HEK293T (cell line): ENCODE measurements at regions of chr2 and their contacts with region 1.

Region 1: DNA sequence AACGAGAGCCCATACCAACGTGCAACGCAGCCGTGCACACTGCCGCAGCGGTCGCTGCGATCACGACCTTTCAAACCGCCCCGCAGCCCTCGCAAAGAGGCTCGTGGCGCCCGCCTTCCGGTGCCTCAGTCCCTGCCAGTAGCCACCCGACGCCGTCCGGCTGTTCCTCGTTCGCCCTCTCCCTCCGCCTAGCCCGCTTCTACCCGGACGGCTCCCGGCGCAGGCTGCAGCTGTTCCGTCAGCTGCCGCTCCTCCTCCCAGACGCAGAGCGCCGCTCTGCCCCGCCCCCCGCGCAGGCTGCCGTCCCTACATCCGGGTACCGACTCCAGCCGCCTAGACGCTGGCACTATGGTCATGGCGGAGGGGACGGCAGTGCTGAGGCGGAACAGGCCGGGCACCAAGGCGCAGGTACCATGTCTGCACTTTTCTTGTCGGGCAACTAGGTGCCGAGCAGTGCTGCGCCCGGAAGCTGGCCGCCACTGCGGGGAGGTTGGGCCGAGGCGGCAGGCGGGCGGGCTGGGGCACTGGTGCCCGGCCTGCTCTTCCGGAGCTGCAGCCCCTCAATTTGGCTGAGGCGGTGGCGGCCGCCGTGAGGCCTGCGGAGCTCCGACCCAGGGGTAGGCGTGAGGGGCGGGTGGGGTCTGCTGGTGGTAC is at the start of gene MOB4:
- DNase-seq: peak; percentile 93

Region 2: GRCh38 chr2:197477797-197478196 is 38.1 kb before region 1 on chr2:
- CTCF ChIA-PET with region 1: no interaction called
- POLR2A ChIA-PET with region 1: no interaction called
- DNase-seq: no peak

Region 3: GRCh38 chr2:197499594-197500526 is 16.0 kb before region 1 on chr2 and contains the starts of genes HSPD1 and HSPE1:
- CTCF ChIA-PET with region 1: interaction called, 4 read pairs
- POLR2A ChIA-PET with region 1: interaction called, 52 read pairs
- DNase-seq: peak; percentile 93

Region 4: DNA sequence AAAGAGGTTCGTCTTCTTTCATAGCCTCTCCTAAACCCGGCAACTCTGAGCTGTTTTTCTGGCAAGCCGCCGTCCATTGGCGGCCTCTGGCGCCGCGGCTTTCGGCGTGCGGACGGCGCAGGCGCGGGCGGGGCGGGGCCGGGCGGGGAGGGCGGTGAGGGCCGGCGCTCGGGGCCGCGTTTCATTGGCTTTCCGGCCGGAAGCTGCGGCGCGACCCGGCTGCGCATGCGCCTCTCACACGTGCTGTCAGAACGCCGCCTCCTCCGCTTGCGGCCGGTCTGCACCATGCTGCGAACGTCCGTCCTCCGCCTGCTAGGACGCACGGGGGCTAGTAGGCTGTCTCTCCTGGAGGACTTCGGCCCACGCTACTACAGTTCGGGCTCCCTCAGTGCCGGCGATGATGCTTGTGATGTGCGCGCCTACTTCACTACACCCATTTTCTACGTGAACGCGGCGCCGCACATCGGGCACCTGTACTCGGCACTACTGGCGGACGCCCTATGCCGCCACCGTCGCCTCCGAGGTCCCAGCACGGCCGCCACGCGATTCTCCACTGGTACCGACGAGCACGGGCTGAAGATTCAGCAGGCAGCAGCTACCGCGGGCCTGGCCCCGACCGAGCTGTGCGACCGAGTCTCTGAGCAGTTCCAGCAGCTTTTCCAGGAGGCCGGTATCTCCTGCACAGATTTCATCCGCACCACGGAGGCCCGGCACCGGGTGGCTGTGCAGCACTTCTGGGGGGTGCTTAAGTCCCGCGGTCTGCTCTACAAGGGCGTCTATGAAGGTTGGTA is 189.4 kb after region 1 on chr2 and contains the start of gene MARS2:
- CTCF ChIA-PET with region 1: no interaction called
- POLR2A ChIA-PET with region 1: interaction called, 17 read pairs
- DNase-seq: peak; percentile 95